ENCODE measurements at regions of chr2 and their contacts with region 1.

Region 1: DNA sequence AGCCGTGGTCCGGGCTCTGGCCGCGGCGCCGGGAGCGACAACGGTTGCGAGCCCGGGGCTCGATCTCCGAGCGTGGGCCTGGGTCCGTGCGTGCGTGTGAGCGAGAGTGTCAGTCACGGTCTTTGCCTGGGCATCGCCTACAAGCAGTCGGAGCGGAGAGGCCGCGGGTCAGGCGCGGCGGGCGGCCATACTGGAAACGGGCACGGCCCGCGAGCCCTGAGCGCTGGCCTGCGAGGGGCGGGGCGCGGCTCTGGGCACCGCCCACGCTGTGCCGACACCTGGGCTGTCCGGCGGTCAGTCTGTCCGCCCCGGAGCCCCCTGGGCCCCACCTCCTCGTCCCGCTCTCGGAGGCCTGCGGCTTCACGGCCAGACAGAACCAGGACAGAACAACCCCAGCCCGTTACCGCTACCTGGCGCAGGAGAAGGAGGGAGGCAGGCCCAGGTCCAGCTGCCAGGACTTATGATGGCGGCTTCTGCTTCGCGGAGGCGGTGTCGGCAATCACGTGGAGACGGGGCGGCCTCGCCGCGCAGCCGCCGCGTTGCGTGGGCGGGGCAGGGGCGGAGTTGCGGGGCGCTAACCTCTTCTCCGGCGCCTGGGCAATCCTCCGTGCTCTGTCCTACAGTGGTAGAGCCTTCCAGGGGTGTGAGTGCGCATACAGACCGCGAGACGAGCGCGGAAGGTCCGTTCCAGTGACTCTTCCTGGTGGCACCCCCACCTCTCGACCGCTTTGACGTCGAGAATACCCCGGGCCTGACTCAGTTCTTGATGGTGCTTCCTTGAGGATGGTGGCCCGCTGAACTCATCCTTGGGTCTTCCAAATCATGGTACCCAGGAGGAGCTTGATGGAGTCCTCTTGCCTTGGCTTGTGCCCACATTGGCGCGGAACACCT is at the start of gene TMEM131:
- DNase-seq: peak; percentile 98
- ATAC-seq: peak; percentile 80
- H3K4me3 Mint-ChIP-seq: peak within 1 kb of the TSS; percentile 93
- H3K27ac Mint-ChIP-seq: peak within 1 kb of the TSS; percentile 91
- H3K4me1 Mint-ChIP-seq: peaks cover 49% of the 10 kb centered on the region
- H3K27me3 Mint-ChIP-seq: no peaks in the 10 kb centered on the region
- CTCF ChIP-seq: no peak
- total RNA-seq, gene TMEM131: 121 and 146 TPM in 2 replicates

Region 2: GRCh38 chr2:97663965-97664635 is 331.9 kb before region 1 on chr2 and contains the start of gene ACTR1B:
- CTCF ChIA-PET with region 1: no interaction called
- POLR2A ChIA-PET with region 1: no interaction called
- intact Hi-C with region 1: loop called (anchors 1 kb)
- DNase-seq: peak; percentile 93
- ATAC-seq: peak; percentile 89
- H3K4me3 Mint-ChIP-seq: peak within 1 kb of the TSS; percentile 92
- H3K27ac Mint-ChIP-seq: peak within 1 kb of the TSS; percentile 91
- H3K4me1 Mint-ChIP-seq: peaks cover 28% of the 10 kb centered on the region
- H3K27me3 Mint-ChIP-seq: no peaks in the 10 kb centered on the region
- CTCF ChIP-seq: no peak
- total RNA-seq, gene ACTR1B: 55.0 and 55.9 TPM in 2 replicates

Region 3: GRCh38 chr2:97911206-97911921 is 84.6 kb before region 1 on chr2:
- CTCF ChIA-PET with region 1: interaction called, 3 read pairs
- POLR2A ChIA-PET with region 1: interaction called, 10 read pairs
- intact Hi-C with region 1: loop called (anchors 1 kb)
- DNase-seq: no peak
- ATAC-seq: peak; percentile 72
- H3K4me3 Mint-ChIP-seq: peak overlapping the region; percentile 67
- H3K27ac Mint-ChIP-seq: peak overlapping the region; percentile 82
- H3K4me1 Mint-ChIP-seq: peaks cover 98% of the 10 kb centered on the region
- H3K27me3 Mint-ChIP-seq: no peaks in the 10 kb centered on the region
- CTCF ChIP-seq: no peak

Region 4: DNA sequence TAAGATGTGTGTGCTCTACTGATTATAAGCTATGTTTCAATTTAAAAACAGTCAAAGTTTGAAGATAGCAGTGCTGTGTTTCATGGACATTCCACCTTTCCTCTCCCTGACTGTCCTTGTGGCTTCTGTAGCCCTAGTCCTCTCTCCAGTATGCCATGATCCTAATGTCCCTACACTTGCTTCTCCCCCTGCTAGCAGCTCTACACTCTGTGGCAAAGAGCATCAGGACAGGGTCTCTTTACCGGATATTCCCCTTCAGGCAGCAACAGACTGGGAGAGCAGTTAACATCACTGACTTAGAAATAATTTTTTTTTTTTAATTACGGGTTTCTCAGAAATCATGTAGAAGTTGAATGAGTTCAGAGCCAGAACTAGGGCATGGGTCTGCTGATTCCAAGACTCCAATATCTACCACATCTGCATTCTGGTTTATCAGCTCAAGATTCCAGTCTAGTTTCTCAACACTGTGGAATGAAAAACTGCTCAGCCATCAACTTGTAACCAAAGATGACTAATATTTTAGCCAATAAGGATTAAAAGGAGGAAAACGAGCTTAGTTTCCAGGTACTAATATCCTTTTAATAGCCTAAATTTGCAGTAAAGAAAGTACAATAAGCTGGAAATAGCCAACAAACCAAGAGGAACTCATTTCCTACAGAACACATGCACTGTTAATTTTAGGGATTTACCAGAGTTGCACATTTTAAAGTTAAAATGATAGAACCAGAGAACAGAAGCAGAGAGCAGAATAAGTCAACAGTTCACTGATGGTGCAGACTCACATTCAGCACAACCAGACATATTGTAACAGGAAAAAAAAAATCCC is 45.4 kb before region 1 on chr2:
- CTCF ChIA-PET with region 1: no interaction called
- POLR2A ChIA-PET with region 1: no interaction called
- intact Hi-C with region 1: loop called (anchors 5 kb)
- DNase-seq: no peak
- ATAC-seq: no peak
- H3K4me3 Mint-ChIP-seq: no peak overlapping the region
- H3K27ac Mint-ChIP-seq: peak overlapping the region; percentile 73
- H3K4me1 Mint-ChIP-seq: peaks cover 90% of the 10 kb centered on the region
- H3K27me3 Mint-ChIP-seq: no peaks in the 10 kb centered on the region
- CTCF ChIP-seq: no peak

Region 5: GRCh38 chr2:98086491-98087446 is 90.8 kb after region 1 on chr2 and contains the start of gene VWA3B:
- CTCF ChIA-PET with region 1: interaction called, 3 read pairs
- POLR2A ChIA-PET with region 1: interaction called, 7 read pairs
- intact Hi-C with region 1: loop called (anchors 1 kb)
- DNase-seq: peak; percentile 83
- ATAC-seq: peak; percentile 93
- H3K4me3 Mint-ChIP-seq: peak within 1 kb of the TSS; percentile 89
- H3K27ac Mint-ChIP-seq: peak within 1 kb of the TSS; percentile 81
- H3K4me1 Mint-ChIP-seq: peaks cover 49% of the 10 kb centered on the region
- H3K27me3 Mint-ChIP-seq: no peaks in the 10 kb centered on the region
- CTCF ChIP-seq: no peak
- total RNA-seq, gene VWA3B: not detected in 2 replicates

Region 6: GRCh38 chr2:98175811-98176210 is 179.8 kb after region 1 on chr2:
- CTCF ChIA-PET with region 1: interaction called, 3 read pairs
- POLR2A ChIA-PET with region 1: interaction called, 3 read pairs
- intact Hi-C with region 1: loop called (anchors 2 kb)
- DNase-seq: no peak
- ATAC-seq: peak; percentile 61
- H3K4me3 Mint-ChIP-seq: no peak overlapping the region
- H3K27ac Mint-ChIP-seq: no peak overlapping the region
- H3K4me1 Mint-ChIP-seq: peaks cover 3% of the 10 kb centered on the region
- H3K27me3 Mint-ChIP-seq: peaks cover 17% of the 10 kb centered on the region
- CTCF ChIP-seq: no peak

Measured in activated B cell treated with CpG ODN at 0.5 μM for 24 hours (primary cell).